ENCODE measurements at regions of chr3 and their contacts with region 1.

Region 1: GRCh38 chr3:117526470-117527079 is 817.0 kb downstream of the TUSC7 start:
- DNase-seq: no peak
- H3K4me3 Mint-ChIP-seq: no peak overlapping the region
- H3K27ac Mint-ChIP-seq: no peak overlapping the region
- H3K4me1 Mint-ChIP-seq: no peaks in the 10 kb centered on the region
- H3K27me3 Mint-ChIP-seq: no peaks in the 10 kb centered on the region

Region 2: DNA sequence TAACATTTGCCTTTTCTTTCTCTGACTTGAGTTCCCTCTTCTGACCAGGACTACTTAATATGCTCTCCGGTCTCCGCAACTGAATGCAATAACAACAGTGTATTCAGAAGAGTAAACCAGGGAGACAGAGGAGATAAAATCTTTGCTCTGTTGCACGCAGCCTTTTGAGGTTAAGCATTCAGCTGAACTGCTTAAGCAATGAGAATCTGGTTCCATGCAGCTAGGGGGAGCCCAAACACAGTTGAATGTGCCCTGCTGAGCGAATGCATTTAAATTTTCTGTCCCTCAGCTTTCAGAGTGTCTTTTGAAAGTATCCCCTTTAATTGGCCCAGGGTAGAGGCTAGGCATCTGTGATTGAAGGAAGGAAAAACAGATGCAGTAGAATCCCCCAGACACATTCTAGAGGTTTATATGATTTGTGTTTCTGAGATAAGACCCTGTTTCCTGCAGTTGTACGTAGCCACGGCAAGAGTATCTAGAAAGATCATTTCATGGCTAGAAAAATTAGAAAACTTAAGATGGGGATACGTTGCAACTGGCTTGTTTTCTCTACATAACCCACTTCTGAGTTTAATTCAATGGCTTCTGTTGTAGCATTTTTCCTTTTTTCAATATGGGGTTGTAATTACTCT is 507.4 kb before region 1 on chr3:
- intact Hi-C with region 1: loop called (anchors 2 kb)
- DNase-seq: peak; percentile 73
- H3K4me3 Mint-ChIP-seq: no peak overlapping the region
- H3K27ac Mint-ChIP-seq: no peak overlapping the region
- H3K4me1 Mint-ChIP-seq: no peaks in the 10 kb centered on the region
- H3K27me3 Mint-ChIP-seq: no peaks in the 10 kb centered on the region